GM10248 (cell line): ENCODE measurements at regions of chr1 and their contacts with region 1.

Region 1: GRCh38 chr1:206544562-206545257 is 37.4 kb downstream of the RASSF5 start:
- DNase-seq: peak; percentile 85
- CTCF ChIP-seq: peak; percentile 93

Region 2: DNA sequence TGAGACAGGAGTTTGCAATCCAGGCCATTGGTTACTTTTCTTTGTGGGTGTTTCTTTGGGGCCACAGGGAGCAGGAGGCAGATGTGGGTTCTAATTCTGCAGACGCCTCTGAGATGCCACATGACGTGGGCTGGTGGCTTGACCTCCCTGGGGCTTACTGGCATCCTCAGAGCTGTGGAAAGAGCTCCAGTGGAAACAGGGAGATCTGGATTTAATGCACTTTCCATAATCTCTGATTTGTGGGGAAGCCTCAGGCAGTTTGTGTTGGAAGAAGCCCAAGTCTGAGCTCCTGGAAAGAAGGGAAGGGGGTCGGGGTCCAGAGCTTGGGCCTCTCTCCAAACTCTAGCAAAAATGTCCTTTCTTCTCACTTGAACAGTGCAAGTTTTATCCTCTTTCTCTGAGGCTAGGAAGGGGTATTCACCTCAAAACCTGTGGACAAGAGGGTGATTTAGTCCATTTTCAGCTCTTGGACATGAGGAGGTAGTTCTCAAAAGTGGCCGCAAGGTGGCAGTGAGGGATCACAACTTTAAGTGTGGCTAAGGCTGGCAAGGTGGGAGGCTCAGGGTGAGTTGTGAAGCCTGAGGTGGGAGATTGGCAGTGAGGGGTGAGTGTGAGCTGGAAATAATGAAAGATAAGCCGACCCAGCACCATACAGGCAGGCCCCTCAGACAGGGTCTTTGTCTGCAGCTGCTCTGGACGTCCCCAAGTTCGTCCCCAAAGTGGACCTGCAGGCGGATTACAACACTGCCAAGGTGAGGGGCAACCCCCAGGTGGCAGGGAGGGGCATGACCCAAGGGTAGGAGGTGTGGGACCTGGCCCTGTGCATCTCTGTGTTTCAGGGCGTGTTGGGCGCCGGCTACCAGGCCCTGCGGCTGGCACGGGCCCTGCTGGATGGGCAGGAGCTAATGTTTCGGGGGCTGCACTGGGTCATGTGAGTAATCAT is 65.3 kb before region 1 on chr1:
- CTCF ChIA-PET with region 1: interaction called, 23 read pairs
- POLR2A ChIA-PET with region 1: no interaction called
- DNase-seq: peak; percentile 85
- CTCF ChIP-seq: peak; percentile 74

Region 3: GRCh38 chr1:206517784-206518183 is 26.9 kb before region 1 on chr1:
- CTCF ChIA-PET with region 1: interaction called, 14 read pairs
- POLR2A ChIA-PET with region 1: no interaction called
- DNase-seq: no peak
- CTCF ChIP-seq: no peak

Region 4: DNA sequence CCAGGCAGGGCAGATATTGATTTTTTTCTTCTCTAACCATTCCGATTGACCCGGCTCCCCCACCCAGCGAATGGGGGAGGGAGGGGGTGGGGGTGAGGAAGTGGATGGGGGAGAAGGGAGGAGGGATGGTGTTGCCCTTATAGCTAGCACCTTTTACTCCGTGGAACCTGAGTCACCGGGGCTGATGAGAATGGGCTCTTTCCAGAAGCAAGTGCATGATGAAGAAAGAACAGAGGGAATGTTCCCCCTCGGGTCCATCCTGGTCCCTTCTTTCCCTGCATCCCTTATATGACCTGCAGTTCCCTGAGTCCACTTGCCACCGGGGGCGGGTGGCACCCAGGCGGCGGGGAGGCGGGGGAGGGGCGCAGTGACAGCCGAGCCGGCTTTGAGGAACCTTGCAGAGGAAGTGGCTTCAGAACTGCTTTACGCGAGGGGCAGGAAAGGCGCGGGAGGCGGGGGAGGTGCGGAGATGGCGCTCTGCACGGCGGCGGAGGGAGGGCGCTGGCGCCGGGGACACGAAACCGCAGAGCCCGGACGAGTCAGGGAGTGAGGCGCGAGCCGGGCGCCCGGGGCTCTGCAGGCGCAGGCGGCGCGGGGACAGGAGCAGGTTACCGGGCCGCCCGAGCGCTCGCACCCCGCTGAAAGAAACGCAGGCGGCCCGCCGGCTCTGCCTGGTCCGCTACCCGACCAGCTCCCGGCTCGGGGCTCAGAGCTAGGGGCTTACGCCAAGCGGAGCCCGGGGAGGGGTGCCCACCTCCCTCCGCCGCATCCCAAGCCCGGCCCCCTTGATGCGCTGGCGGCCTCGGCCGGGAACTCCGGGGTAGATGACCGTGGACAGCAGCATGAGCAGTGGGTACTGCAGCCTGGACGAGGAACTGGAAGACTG is 12.3 kb after region 1 on chr1:
- CTCF ChIA-PET with region 1: interaction called, 290 read pairs
- POLR2A ChIA-PET with region 1: no interaction called
- DNase-seq: peak; percentile 80
- CTCF ChIP-seq: no peak

Region 5: DNA sequence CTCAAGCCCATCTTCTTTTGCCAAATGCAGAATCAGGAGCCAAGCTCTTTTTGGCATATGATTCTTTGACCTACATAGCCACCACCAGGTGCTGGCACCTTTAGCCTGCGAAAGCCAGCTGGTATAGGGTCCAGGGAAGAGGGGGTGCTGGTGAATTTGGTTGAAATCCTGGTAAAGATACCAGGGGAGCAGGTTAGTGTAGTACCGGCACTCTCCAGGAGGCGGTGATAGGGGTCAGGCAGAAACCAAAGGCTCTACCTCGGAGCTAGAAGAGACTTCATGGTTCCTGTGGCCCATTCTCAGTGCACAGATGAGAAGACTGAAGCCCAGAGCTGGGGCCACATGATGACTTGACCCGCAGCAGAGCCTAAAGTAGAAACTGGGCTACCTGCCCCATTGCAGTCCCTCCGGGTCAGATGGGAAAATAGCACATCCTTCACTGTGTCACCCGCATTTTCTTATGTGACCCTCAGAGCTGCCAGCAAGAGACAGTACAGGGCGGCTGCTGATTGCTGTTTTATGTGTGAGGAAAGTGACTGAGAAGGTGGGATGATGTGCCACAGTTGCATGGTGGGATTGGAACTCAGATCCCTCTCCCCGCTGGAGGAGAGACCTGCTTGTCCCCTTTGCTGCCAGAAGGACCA is 189.9 kb after region 1 on chr1:
- CTCF ChIA-PET with region 1: no interaction called
- POLR2A ChIA-PET with region 1: no interaction called
- DNase-seq: peak; percentile 73
- CTCF ChIP-seq: peak; percentile 77

Region 6: GRCh38 chr1:206878456-206878855 is 333.7 kb after region 1 on chr1:
- CTCF ChIA-PET with region 1: no interaction called
- POLR2A ChIA-PET with region 1: no interaction called
- DNase-seq: no peak
- CTCF ChIP-seq: no peak